ENCODE measurements at regions of chr4 and their contacts with region 1.

Region 1: GRCh38 chr4:15811703-15812337 is 33.7 kb downstream of the CD38 start:
- DNase-seq: no peak
- H3K4me3 ChIP-seq: no peak overlapping the region
- CTCF ChIP-seq: no peak

Region 2: DNA sequence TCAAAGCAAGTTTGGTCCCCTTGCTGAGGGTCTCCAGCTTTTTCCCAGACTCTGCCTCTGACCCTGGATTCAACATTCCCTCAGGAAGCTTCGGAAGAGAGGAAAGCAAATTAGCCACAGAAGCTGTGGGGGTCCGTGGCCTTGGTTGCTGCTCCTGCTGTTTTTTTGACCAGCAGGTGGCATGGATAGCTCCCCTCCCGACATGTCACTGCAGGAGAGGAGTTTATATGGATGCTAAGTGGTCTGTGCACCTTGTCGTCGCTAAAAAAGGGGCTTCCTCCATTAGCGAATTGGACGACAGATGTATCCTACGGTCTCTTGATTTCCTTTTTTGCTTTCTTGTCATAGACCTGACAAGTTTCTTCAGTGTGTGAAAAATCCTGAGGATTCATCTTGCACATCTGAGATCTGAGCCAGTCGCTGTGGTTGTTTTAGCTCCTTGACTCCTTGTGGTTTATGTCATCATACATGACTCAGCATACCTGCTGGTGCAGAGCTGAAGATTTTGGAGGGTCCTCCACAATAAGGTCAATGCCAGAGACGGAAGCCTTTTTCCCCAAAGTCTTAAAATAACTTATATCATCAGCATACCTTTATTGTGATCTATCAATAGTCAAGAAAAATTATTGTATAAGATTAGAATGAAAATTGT is 36.5 kb after region 1 on chr4:
- in situ Hi-C with region 1: loop called (anchors 5 kb)
- DNase-seq: no peak
- H3K4me3 ChIP-seq: no peak overlapping the region
- CTCF ChIP-seq: no peak

Measured in astrocyte of the cerebellum (primary cell).